Heart left ventricle (tissue), 16 donors: ENCODE measurements at regions of chr15 and their contacts with region 1.

Region 1: GRCh38 chr15:53197426-53197839 is 407.3 kb upstream of the ONECUT1 start:
- DNase-seq: peak; percentile 29 to 60 (median 33)
- ATAC-seq: peak in 3 of 4 donors; percentile 42 to 63 (median 49)
- H3K4me3 ChIP-seq: peak overlapping the region in 1 of 12 donors; percentile 30
- H3K27ac ChIP-seq: no peak overlapping the region
- H3K4me1 ChIP-seq: peaks cover 0 to 4% (median 0%) of the 10 kb centered on the region in 12 donors
- H3K27me3 ChIP-seq: peaks cover 0 to 21% (median 0%) of the 10 kb centered on the region in 9 donors
- CTCF ChIP-seq: peak; percentile 62 to 80 (median 76)
- POLR2A ChIP-seq: no peak

Region 2: GRCh38 chr15:52780172-52780980 is 417.1 kb before region 1 on chr15:
- intact Hi-C with region 1: loop called in 9 of 10 experiments (anchors 1 to 10 kb)
- DNase-seq: peak in 1 of 5 donors; percentile 47
- ATAC-seq: peak; percentile 17 to 61 (median 42)
- H3K4me3 ChIP-seq: peak overlapping the region in 4 of 12 donors; percentile 1 to 30 (median 16)
- H3K27ac ChIP-seq: peak overlapping the region in 1 of 12 donors; percentile 45
- H3K4me1 ChIP-seq: peaks cover 0 to 41% (median 6%) of the 10 kb centered on the region in 12 donors
- H3K27me3 ChIP-seq: peaks cover 37 to 95% (median 69%) of the 10 kb centered on the region in 9 donors
- CTCF ChIP-seq: peak; percentile 73 to 95 (median 84)
- POLR2A ChIP-seq: no peak

Region 3: DNA sequence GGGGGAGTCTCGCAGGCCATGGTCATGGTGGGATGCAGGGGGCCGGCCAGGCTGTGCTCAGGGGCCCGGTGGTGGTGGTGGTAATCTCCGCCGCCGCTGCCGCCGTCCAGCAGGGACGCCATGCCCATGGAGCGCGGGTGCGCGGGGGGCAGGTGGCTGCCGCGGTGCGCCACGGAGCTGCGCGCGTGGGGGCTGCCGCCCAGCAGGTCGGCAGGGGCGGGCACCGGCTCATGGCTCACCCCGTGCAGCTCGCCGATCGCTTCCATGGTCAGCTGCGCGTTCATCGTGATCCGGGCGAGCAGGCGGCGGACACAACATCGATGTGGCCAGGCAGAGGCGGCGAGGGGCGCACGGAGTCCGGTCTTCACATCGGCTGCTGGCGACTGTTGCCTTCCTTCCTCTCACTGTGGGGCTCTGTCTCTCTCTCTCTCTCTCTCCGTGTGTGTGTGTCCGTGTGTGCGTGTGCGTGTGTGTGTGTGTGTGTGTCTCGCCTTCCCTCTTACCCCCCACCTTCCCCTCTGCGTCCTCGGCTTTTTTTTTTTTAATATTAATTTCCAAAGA is 407.8 kb before region 1 on chr15:
- intact Hi-C with region 1: loop called in 8 of 10 experiments (anchors 5 to 10 kb)
- DNase-seq: no peak
- ATAC-seq: no peak
- H3K4me3 ChIP-seq: peak overlapping the region in 11 of 12 donors; percentile 34 to 63 (median 51)
- H3K27ac ChIP-seq: no peak overlapping the region
- H3K4me1 ChIP-seq: peaks cover 0 to 66% (median 28%) of the 10 kb centered on the region in 12 donors
- H3K27me3 ChIP-seq: peaks cover 47 to 96% (median 88%) of the 10 kb centered on the region in 9 donors
- CTCF ChIP-seq: no peak
- POLR2A ChIP-seq: no peak

Region 4: GRCh38 chr15:53716909-53717876 is 519.8 kb after region 1 on chr15:
- intact Hi-C with region 1: loop called in 1 of 10 experiments (anchors 5 kb)
- DNase-seq: no peak
- ATAC-seq: no peak
- H3K4me3 ChIP-seq: no peak overlapping the region
- H3K27ac ChIP-seq: no peak overlapping the region
- H3K4me1 ChIP-seq: no peaks in the 10 kb centered on the region
- H3K27me3 ChIP-seq: peaks cover 0 to 14% (median 0%) of the 10 kb centered on the region in 9 donors
- CTCF ChIP-seq: peak in 6 of 12 donors; percentile 13 to 41 (median 24)
- POLR2A ChIP-seq: no peak